Tibial artery (tissue), 4 donors: ENCODE measurements at regions of chr9 and their contacts with region 1.

Region 1: GRCh38 chr9:26437056-26437711 is 455.4 kb downstream of the CAAP1 start:
- DNase-seq: no peak
- H3K4me3 ChIP-seq: no peak overlapping the region
- H3K27ac ChIP-seq: no peak overlapping the region
- H3K4me1 ChIP-seq: no peaks in the 10 kb centered on the region
- H3K27me3 ChIP-seq: no peaks in the 10 kb centered on the region
- CTCF ChIP-seq: no peak

Region 2: DNA sequence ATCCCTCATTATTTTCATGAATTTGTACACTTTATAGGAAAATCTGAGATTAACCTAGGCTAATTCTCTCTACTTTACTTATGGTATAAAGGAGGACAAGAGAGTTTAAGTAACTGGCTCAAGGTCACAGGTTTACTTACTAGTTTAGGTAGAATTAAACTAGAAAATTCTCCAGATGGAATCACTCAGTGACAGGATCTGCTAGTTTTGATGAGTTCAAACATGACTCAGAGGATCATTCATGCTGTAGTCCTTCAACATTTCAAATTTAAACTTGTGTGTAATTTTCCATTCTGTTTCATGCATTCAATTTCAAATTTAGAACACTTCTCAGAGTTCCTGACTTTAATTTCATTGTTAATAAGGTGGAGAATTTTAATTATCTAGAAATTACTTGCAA is 273.3 kb before region 1 on chr9:
- intact Hi-C with region 1: no loop called
- DNase-seq: no peak
- H3K4me3 ChIP-seq: no peak overlapping the region
- H3K27ac ChIP-seq: no peak overlapping the region
- H3K4me1 ChIP-seq: no peaks in the 10 kb centered on the region
- H3K27me3 ChIP-seq: no peaks in the 10 kb centered on the region
- CTCF ChIP-seq: no peak

Region 3: GRCh38 chr9:26471261-26471660 is 34.1 kb after region 1 on chr9:
- intact Hi-C with region 1: loop called (anchors 1 kb)
- DNase-seq: no peak
- H3K4me3 ChIP-seq: no peak overlapping the region
- H3K27ac ChIP-seq: no peak overlapping the region
- H3K4me1 ChIP-seq: no peaks in the 10 kb centered on the region
- H3K27me3 ChIP-seq: no peaks in the 10 kb centered on the region
- CTCF ChIP-seq: no peak